ENCODE measurements at regions of chr13 and their contacts with region 1.

Region 1: GRCh38 chr13:85313761-85314503 is 485.3 kb downstream of the SLITRK6 start:
- DNase-seq: no peak
- H3K4me3 Mint-ChIP-seq: no peak overlapping the region
- H3K27ac Mint-ChIP-seq: no peak overlapping the region
- H3K4me1 Mint-ChIP-seq: no peaks in the 10 kb centered on the region
- H3K27me3 Mint-ChIP-seq: no peaks in the 10 kb centered on the region

Region 2: DNA sequence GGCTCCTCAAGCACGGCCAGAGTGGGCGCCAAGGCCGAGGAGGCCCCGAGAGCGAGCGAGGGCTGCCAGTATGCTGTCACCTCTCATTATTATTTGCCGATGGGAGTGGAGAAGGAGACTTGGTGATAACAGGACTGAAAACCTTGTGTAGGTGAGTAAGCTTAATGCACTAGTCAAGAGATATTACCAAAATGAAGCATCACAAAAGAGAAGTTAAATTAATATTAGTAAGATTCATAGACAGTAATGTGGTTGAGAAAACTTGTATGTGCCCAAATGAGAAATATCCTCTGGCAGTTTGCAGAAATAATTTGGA is 1227.1 kb before region 1 on chr13:
- intact Hi-C with region 1: no loop called
- DNase-seq: no peak
- H3K4me3 Mint-ChIP-seq: no peak overlapping the region
- H3K27ac Mint-ChIP-seq: no peak overlapping the region
- H3K4me1 Mint-ChIP-seq: no peaks in the 10 kb centered on the region
- H3K27me3 Mint-ChIP-seq: no peaks in the 10 kb centered on the region

Region 3: DNA sequence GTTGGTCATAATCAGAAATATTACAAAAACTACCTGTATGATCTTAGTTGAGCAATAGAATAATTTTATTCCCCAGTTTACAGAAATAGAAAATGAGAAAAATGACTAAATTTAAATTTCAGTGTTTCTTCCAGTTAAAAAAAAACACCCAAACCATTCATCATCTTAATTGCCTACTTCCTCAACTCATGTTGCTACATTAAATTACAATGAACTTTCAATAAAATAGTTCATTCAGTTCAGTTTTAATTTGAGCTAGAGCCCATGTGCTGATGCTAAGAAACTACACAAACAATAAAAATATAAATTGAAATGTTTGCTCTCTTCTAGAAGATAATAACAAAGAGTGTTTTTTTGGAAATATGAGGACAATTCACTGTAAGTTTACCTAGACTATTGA is 335.1 kb before region 1 on chr13:
- intact Hi-C with region 1: loop called (anchors 5 kb)
- DNase-seq: no peak
- H3K4me3 Mint-ChIP-seq: no peak overlapping the region
- H3K27ac Mint-ChIP-seq: no peak overlapping the region
- H3K4me1 Mint-ChIP-seq: no peaks in the 10 kb centered on the region
- H3K27me3 Mint-ChIP-seq: no peaks in the 10 kb centered on the region